A549 (cell line): ENCODE measurements at regions of chr20 and their contacts with region 1.

Region 1: DNA sequence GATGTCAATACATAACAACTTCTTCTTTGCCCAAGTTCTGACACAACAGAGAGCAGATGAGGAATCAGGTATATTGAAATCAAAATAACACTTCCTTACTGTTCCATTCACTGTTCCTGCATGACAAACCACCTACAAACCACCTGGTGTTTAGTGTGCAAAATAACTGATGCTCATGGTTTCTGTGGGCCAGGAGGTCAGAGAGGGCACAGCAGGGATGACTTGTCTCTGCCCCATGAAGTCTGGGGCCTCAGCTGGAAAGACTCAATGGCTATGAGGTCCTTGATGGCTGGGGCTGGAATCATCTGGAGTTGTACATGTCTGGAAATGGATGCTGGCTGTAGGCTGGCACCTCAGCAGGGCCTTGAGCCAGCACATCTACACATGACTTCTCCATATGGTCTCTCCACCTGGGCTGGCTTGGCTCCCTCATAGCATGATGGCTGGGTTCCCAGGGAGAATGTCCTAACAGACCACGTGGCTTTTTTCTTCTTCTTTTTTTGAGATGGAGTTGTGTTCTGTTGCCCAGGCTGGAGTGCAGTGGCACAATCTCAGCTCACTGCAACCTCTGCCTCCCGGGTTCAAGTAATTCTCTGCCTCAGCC is 7.4 kb upstream of the COX4I2 start:
- DNase-seq: no peak
- ATAC-seq: no peak
- H3K4me3 ChIP-seq: no peak overlapping the region
- H3K27ac ChIP-seq: no peak overlapping the region
- H3K4me1 ChIP-seq: no peaks in the 10 kb centered on the region
- CTCF ChIP-seq: no peak
- EP300 ChIP-seq: no peak
- POLR2A ChIP-seq: no peak
- RAD21 ChIP-seq: no peak

Region 2: GRCh38 chr20:31547017-31547675 is 83.1 kb before region 1 on chr20:
- CTCF ChIA-PET with region 1: interaction called, 16 read pairs
- POLR2A ChIA-PET with region 1: no interaction called
- DNase-seq: no peak
- ATAC-seq: no peak
- H3K4me3 ChIP-seq: no peak overlapping the region
- H3K27ac ChIP-seq: no peak overlapping the region
- H3K4me1 ChIP-seq: peaks cover 7% of the 10 kb centered on the region
- CTCF ChIP-seq: no peak
- EP300 ChIP-seq: no peak
- POLR2A ChIP-seq: no peak
- RAD21 ChIP-seq: no peak

Region 3: GRCh38 chr20:31572701-31573554 is 57.4 kb before region 1 on chr20:
- CTCF ChIA-PET with region 1: interaction called, 14 read pairs
- POLR2A ChIA-PET with region 1: no interaction called
- DNase-seq: peak; percentile 83 to 99
- ATAC-seq: peak; percentile 79
- H3K4me3 ChIP-seq: peak overlapping the region; percentile 62
- H3K27ac ChIP-seq: peak overlapping the region; percentile 93 to 99
- H3K4me1 ChIP-seq: peaks cover 53% of the 10 kb centered on the region
- CTCF ChIP-seq: no peak
- EP300 ChIP-seq: peak; percentile 92 to 98
- POLR2A ChIP-seq: peak; percentile 52
- RAD21 ChIP-seq: peak in 1 of 2 experiments; percentile 44; a peak in 3 of 5 replicates

Region 4: DNA sequence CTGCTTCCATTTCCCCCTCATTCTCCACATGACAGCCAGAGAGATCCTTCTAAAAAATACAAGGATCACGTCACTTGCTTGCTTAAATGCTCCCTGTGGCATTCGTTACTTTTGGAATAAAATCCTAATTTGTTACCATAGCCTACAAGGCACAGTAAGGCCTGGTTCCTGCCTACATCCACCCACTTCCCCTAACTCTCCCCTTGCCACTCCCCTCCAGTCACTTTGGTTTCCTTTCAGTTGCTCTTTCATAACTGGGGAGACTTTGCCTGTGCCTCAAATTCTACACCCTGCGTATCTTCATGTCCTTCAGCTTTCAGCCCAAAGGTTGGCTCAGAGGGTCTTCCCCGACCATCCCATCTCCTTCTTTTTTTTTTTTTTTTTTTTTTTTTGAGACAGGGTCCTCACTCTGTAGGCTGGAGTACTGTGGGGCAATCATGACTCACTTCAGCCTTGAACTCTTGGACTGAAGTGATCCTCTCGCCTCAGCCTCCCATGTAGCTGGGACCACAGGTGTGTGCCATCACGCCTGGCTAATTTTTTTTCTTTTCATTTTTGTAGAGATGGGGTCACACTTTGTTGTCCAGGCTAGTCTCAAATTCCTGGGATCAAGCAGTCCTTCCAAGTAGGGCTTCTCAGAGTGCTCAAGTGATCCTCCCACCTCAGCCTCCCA is 12.7 kb before region 1 on chr20:
- CTCF ChIA-PET with region 1: interaction called, 59 read pairs
- POLR2A ChIA-PET with region 1: interaction called, 9 read pairs
- DNase-seq: no peak
- ATAC-seq: no peak
- H3K4me3 ChIP-seq: no peak overlapping the region
- H3K27ac ChIP-seq: no peak overlapping the region
- H3K4me1 ChIP-seq: peaks cover 1% of the 10 kb centered on the region
- CTCF ChIP-seq: no peak
- EP300 ChIP-seq: no peak
- POLR2A ChIP-seq: no peak
- RAD21 ChIP-seq: no peak

Region 5: GRCh38 chr20:31652917-31653396 is 22.7 kb after region 1 on chr20:
- CTCF ChIA-PET with region 1: interaction called, 91 read pairs
- POLR2A ChIA-PET with region 1: no interaction called
- DNase-seq: no peak
- ATAC-seq: peak; percentile 29 to 64; a peak in 5 of 6 replicates
- H3K4me3 ChIP-seq: no peak overlapping the region
- H3K27ac ChIP-seq: no peak overlapping the region
- H3K4me1 ChIP-seq: 0 out of 3 replicates have a peak, but pooled peaks cover 5% of the 10 kb centered on the region
- CTCF ChIP-seq: no peak
- EP300 ChIP-seq: no peak
- POLR2A ChIP-seq: no peak
- RAD21 ChIP-seq: no peak

Region 6: GRCh38 chr20:31698803-31699718 is 68.8 kb after region 1 on chr20:
- CTCF ChIA-PET with region 1: interaction called, 11 read pairs
- POLR2A ChIA-PET with region 1: no interaction called
- DNase-seq: peak; percentile 63 to 87
- ATAC-seq: peak; percentile 59 to 74
- H3K4me3 ChIP-seq: no peak overlapping the region
- H3K27ac ChIP-seq: peak overlapping the region; percentile 89 to 95
- H3K4me1 ChIP-seq: peaks cover 100% of the 10 kb centered on the region
- CTCF ChIP-seq: no peak
- EP300 ChIP-seq: peak; percentile 39 to 58; a peak in 2 of 5 replicates
- POLR2A ChIP-seq: no peak
- RAD21 ChIP-seq: no peak

Region 7: DNA sequence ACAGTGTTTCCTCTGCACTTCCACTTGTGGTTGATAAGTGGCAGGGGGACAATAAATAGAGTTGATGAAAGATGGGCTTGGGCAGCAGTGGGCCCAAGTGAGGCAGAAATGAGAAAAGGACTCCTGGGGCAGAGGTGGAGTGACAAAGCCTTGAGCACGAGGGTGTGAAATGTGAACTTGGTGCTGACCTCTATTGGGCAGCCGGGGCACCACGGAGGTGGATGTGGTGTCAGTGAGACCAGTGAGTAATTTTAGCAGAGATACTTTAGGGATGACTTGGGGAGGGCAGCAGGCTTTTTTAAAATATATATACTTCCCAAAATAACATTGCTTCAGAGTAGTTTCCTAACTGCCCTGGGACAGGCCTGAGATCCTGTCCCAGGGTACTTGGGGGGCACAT is 158.3 kb after region 1 on chr20:
- CTCF ChIA-PET with region 1: interaction called, 15 read pairs
- POLR2A ChIA-PET with region 1: no interaction called
- DNase-seq: peak; percentile 20 to 21
- ATAC-seq: peak; percentile 74 to 84; a peak in 5 of 6 replicates
- H3K4me3 ChIP-seq: no peak overlapping the region
- H3K27ac ChIP-seq: no peak overlapping the region
- H3K4me1 ChIP-seq: no peaks in the 10 kb centered on the region
- CTCF ChIP-seq: 0 out of 3 replicates have a peak, but pooled peaks have one; percentile 10
- EP300 ChIP-seq: no peak
- POLR2A ChIP-seq: no peak
- RAD21 ChIP-seq: no peak; a peak in 1 of 5 replicates